ENCODE measurements at regions of chr15 and their contacts with region 1.

Region 1: DNA sequence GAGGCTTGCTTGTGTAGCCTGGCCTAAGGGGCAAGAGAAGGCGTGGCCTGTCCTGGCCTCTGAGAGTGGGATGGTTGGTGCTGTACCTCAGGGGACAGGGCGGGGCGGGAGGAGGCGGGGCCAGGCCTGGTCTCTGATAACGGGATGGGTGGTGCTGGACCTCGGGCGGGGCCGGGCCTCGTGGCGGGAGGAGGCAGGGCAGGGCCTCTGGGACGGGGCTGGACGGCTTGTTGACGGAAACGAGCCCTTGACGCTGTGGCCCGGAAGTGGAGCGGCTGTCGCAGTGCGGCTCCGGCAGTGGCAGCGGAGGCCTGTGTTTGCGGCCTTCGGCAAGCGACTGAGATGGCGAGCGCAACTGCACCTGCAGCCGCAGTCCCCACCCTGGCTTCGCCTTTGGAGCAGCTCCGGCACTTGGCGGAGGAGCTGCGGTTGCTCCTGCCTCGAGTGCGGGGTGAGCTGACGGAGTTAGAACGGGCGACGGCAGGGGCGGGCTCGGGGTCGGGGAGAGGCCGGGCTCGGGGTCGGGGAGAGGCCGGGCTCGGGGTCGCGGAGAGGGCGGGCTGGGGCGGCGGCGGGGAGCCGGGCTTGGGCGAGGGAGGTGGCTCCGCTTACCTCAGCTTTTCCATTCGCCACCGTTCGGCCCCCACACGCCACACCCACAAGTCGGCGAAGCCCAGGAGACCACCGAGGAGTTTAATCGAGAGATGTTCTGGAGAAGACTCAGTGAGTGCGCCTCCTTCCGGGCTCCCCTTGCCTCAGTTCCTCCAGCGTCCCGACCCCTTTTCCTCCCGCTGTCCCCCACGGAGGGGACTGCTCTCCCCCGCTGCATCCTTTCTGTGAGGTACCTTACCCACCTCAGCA is at the start of gene CCNDBP1:
- DNase-seq: peak; percentile 94 to 98 (median 98)
- ATAC-seq: peak; percentile 98 to 99 (median 99)
- H3K4me3 ChIP-seq: peak within 1 kb of the TSS; percentile 68 to 93 (median 84)
- H3K27ac ChIP-seq: peak within 1 kb of the TSS; percentile 81 to 95 (median 91)
- H3K4me1 ChIP-seq: peaks cover 0 to 49% (median 40%) of the 10 kb centered on the region in 12 donors
- H3K27me3 ChIP-seq: no peaks in the 10 kb centered on the region
- CTCF ChIP-seq: peak in 9 of 12 donors; percentile 24 to 57 (median 37)
- POLR2A ChIP-seq: peak in 1 of 2 donors; percentile 89
- total RNA-seq, gene CCNDBP1: 48.5 to 66.8 (median 59.0) TPM

Region 2: DNA sequence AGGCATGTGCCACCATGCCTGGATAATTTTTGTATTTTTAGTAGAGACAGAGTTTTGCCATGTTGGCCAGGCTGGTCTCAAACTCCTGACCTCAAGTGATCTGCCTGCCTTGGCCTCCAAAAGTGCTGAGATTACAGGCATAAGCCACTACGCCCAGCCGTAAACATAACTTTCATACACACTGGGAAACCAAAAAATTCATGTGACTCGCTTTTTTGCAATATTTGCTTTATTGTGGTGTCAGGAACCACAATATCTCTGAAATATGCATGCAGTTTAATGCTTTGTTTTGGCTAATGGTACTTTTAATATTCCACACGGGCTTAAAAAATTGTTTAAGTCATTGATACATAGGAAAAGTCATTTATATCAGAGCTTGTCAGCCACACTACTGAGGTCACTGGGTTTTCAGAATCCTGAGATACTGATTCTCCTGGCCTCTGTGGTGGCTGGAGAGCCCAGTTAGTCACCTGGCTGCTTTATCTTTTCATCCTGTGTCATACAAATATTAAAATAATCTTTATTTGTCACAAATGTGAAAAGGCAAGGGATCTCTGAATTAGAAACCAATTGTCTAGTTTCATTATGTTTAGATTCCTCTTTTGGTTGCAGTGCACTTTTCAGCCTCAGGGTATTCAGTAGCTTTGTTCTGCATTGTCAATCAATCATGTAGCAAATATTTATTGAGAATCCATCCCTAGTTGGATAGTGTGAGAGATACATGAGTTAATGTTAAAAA is 42.0 kb before region 1 on chr15:
- intact Hi-C with region 1: loop called in 1 of 10 experiments (anchors 5 kb)
- DNase-seq: no peak
- ATAC-seq: no peak
- H3K4me3 ChIP-seq: no peak overlapping the region
- H3K27ac ChIP-seq: peak overlapping the region in 1 of 12 donors; percentile 32
- H3K4me1 ChIP-seq: peaks cover 0 to 20% (median 0%) of the 10 kb centered on the region in 12 donors
- H3K27me3 ChIP-seq: no peaks in the 10 kb centered on the region
- CTCF ChIP-seq: no peak
- POLR2A ChIP-seq: no peak

Region 3: DNA sequence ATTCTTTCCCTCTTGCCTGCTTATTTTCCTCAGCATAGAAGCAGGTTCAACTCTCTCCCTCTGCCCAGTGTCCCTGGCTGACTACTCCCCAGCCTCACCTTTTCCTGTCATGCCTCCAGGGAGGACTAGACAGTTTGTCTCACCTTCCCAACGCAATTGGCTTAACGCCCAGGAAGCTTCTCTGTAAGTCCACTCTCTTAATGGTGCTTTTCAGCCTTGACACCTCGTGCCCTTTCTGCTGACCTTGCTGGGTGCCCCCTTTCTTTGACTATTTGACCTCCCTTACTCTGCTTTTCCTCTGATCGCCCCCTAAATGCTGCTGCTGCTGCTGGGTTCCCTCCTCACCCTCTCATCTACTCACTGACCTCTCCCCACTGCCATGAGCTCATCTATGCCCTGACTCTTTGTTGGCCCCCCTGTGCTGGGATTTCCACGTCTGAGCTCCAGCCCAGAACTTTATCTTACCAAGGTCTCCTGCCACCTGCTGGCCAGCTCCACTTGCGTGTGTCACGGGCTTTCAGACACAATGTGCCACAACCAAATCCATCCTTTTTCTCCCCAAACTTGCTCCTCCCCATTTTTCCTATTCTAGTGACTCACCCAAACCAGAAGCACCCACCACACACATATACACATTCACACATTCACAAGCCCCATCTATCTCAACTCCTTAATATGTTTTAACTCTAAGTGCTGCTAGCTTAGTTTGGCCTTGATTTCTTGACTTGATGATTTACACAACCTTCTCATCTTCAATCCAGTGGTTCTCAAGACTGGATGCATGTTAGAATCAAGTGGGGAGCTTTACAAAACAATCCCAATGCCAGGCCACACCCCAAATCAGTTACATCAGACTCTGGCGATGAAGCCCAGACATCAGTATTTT is 18.9 kb after region 1 on chr15:
- intact Hi-C with region 1: loop called in 2 of 10 experiments (anchors 1 to 2 kb)
- DNase-seq: peak in 4 of 5 donors; percentile 45 to 72 (median 56)
- ATAC-seq: peak in 3 of 4 donors; percentile 62 to 76 (median 71)
- H3K4me3 ChIP-seq: no peak overlapping the region
- H3K27ac ChIP-seq: no peak overlapping the region
- H3K4me1 ChIP-seq: peaks cover 0 to 9% (median 0%) of the 10 kb centered on the region in 12 donors
- H3K27me3 ChIP-seq: peaks cover 0 to 14% (median 0%) of the 10 kb centered on the region in 9 donors
- CTCF ChIP-seq: peak; percentile 41 to 68 (median 58)
- POLR2A ChIP-seq: no peak

Region 4: GRCh38 chr15:43285609-43286037 is 100.2 kb after region 1 on chr15:
- intact Hi-C with region 1: loop called in 2 of 10 experiments (anchors 5 kb)
- DNase-seq: no peak
- ATAC-seq: peak in 3 of 4 donors; percentile 57 to 69 (median 68)
- H3K4me3 ChIP-seq: no peak overlapping the region
- H3K27ac ChIP-seq: no peak overlapping the region
- H3K4me1 ChIP-seq: no peaks in the 10 kb centered on the region
- H3K27me3 ChIP-seq: peaks cover 0 to 4% (median 0%) of the 10 kb centered on the region in 9 donors
- CTCF ChIP-seq: peak; percentile 67 to 86 (median 81)
- POLR2A ChIP-seq: no peak

Measured in heart left ventricle (tissue), 16 donors.